ENCODE measurements at regions of chr1 and their contacts with region 1.

Region 1: DNA sequence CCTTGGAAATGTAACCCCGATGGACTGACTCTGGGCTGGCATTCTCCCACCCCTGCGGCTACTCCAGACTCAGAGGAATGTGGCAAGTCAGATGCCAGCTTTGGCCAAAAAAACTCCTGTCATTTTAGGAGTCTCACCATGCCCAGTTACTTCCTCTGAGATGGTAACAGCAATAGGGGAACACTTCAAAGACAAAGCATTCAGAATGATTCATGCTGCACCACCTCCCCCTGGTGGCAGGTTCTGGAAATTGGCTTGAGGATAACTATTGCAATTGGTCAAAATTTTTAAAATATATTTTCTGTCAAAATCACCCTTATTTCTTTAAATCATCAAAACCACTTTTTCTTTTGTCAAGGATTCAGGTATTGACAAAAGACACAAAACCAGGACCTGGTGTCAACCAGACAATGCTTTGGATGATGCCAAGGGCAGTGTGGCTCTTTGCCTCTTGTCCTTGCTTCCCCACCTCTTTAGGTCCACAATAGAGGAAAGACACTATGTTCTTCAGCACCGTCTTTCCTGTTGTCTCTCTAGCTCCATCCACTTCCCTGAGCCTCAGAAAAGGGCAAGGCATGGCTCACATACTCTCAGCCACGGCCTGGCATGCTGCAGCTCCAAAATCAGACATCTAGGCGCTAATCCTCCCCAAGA is 9.9 kb upstream of the CDCA8 start:
- DNase-seq: peak; percentile 66
- CTCF ChIP-seq: peak; percentile 80

Region 2: GRCh38 chr1:36807262-36807661 is 875.2 kb before region 1 on chr1:
- in situ Hi-C with region 1: no loop called
- DNase-seq: no peak
- CTCF ChIP-seq: no peak

Region 3: DNA sequence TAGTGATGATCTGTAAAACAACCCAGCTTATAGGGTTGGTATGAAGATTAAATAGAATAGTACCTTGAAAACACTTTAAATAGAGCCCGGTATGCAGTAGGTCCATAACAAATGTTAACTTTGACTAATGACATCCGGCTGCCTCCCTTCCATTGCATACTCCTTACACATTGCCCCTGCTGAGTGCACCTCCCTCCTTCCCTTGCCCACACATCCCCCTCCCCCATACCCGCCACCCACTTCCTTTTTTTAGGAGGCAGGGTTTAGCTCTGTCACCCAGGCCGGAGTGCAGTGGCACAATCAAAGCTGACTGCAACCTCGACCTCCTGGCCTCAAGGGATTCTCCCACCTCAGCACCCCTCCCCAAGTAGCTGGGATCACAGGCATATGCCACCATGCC is 232.5 kb before region 1 on chr1:
- in situ Hi-C with region 1: loop called (anchors 10 kb)
- DNase-seq: no peak
- CTCF ChIP-seq: no peak

Region 4: GRCh38 chr1:37752583-37753471 is 70.4 kb after region 1 on chr1:
- in situ Hi-C with region 1: no loop called
- DNase-seq: peak; percentile 84
- CTCF ChIP-seq: no peak

Measured in GM13977 (cell line).